ENCODE measurements at regions of chr18 and their contacts with region 1.

Region 1: DNA sequence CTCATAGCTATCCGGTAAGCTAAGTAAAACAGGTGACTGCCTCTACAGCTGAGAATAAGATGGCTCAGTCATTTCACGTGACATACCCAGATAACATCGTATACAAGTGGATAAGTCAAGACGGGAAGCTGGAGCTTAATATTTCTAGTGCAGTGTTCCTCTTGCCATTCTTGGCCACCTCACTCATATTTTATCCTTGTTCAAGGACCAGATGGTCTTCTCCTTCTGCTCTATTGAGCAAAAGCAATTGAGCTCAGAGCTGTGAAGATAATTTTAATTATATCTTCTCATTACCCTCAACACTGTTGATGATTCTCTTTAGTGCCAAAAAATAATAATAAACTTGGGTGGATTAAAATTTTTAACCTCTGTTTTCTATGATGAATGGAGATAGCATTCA is 201.1 kb downstream of the DCC start:
- DNase-seq: no peak
- H3K4me3 ChIP-seq: no peak overlapping the region
- H3K27ac ChIP-seq: no peak overlapping the region
- H3K4me1 ChIP-seq: no peaks in the 10 kb centered on the region
- H3K27me3 ChIP-seq: no peaks in the 10 kb centered on the region
- CTCF ChIP-seq: no peak

Region 2: GRCh38 chr18:50602525-50602924 is 1938.5 kb before region 1 on chr18:
- intact Hi-C with region 1: loop called (anchors 5 kb)
- DNase-seq: no peak
- H3K4me3 ChIP-seq: no peak overlapping the region
- H3K27ac ChIP-seq: no peak overlapping the region
- H3K4me1 ChIP-seq: peaks cover 0 to 8% (median 0%) of the 10 kb centered on the region in 4 donors
- H3K27me3 ChIP-seq: no peaks in the 10 kb centered on the region
- CTCF ChIP-seq: no peak

Region 3: DNA sequence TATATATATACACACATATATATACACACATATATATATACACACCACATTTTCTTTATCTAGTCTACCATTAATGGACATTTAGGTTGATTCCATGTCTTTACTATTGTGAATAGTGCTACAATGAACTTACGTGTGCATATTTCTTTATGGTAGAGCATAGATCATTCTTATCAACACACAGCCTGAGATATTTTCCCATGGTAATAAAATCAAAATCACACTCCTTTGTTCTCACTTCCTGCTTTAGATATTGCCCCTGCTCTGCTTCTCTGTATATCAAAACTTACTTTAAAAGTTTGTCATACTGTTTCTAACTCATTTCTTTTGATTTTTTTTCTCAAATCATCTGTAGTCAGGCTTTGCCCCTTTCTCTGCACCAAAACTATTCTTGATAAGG is 81.2 kb before region 1 on chr18:
- intact Hi-C with region 1: no loop called
- DNase-seq: no peak
- H3K4me3 ChIP-seq: no peak overlapping the region
- H3K27ac ChIP-seq: no peak overlapping the region
- H3K4me1 ChIP-seq: no peaks in the 10 kb centered on the region
- H3K27me3 ChIP-seq: no peaks in the 10 kb centered on the region
- CTCF ChIP-seq: no peak

Region 4: DNA sequence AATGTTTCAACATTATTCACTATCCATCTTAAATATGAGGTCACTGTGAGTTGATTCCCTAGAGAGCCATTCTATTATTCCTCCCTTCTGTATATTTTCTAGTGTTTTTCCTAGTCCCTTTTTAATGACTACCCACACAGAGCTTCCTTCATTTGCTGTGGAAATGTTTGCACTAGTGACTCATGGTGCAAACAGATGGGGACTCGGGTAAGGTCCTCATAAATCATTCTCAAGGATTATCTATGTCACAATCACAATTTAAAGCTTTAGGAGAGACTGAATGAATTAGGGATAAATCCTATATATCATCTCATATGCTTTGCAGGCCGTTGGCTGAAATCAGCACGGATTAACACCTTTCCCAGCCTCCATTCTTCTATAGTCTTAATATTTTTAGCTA is 41.4 kb before region 1 on chr18:
- intact Hi-C with region 1: no loop called
- DNase-seq: no peak
- H3K4me3 ChIP-seq: no peak overlapping the region
- H3K27ac ChIP-seq: no peak overlapping the region
- H3K4me1 ChIP-seq: no peaks in the 10 kb centered on the region
- H3K27me3 ChIP-seq: no peaks in the 10 kb centered on the region
- CTCF ChIP-seq: no peak

Measured in tibial artery (tissue), 4 donors.